ENCODE measurements at regions of chr5 and their contacts with region 1.

Region 1: GRCh38 chr5:77437194-77437593 is 54.9 kb downstream of the WDR41 start:
- DNase-seq: peak in 1 of 9 experiments; percentile 10
- ATAC-seq: no peak
- H3K4me3 ChIP-seq: no peak overlapping the region
- H3K4me3 Mint-ChIP-seq: no peak overlapping the region
- H3K27ac ChIP-seq: no peak overlapping the region
- H3K27ac Mint-ChIP-seq: no peak overlapping the region
- H3K4me1 ChIP-seq: no peaks in the 10 kb centered on the region
- H3K4me1 Mint-ChIP-seq: no peaks in the 10 kb centered on the region
- H3K27me3 ChIP-seq: no peaks in the 10 kb centered on the region
- H3K27me3 Mint-ChIP-seq: no peaks in the 10 kb centered on the region
- CTCF ChIP-seq: no peak

Region 2: GRCh38 chr5:77064040-77064439 is 373.2 kb before region 1 on chr5:
- CTCF ChIA-PET with region 1: no interaction called
- POLR2A ChIA-PET with region 1: no interaction called
- intact Hi-C with region 1: loop called in 1 of 2 experiments (anchors 10 kb)
- DNase-seq: no peak
- ATAC-seq: no peak
- H3K4me3 ChIP-seq: no peak overlapping the region
- H3K4me3 Mint-ChIP-seq: no peak overlapping the region
- H3K27ac ChIP-seq: no peak overlapping the region
- H3K27ac Mint-ChIP-seq: no peak overlapping the region
- H3K4me1 ChIP-seq: no peaks in the 10 kb centered on the region
- H3K4me1 Mint-ChIP-seq: peaks cover 11% of the 10 kb centered on the region
- H3K27me3 ChIP-seq: no peaks in the 10 kb centered on the region
- H3K27me3 Mint-ChIP-seq: no peaks in the 10 kb centered on the region
- CTCF ChIP-seq: no peak

Region 3: GRCh38 chr5:77638763-77639671 is 201.8 kb after region 1 on chr5:
- CTCF ChIA-PET with region 1: no interaction called
- POLR2A ChIA-PET with region 1: no interaction called
- intact Hi-C with region 1: no loop called
- DNase-seq: peak in 1 of 9 experiments; percentile 21
- ATAC-seq: no peak
- H3K4me3 ChIP-seq: no peak overlapping the region
- H3K4me3 Mint-ChIP-seq: no peak overlapping the region
- H3K27ac ChIP-seq: no peak overlapping the region
- H3K27ac Mint-ChIP-seq: no peak overlapping the region
- H3K4me1 ChIP-seq: peaks cover 15% of the 10 kb centered on the region
- H3K4me1 Mint-ChIP-seq: peaks cover 26% of the 10 kb centered on the region
- H3K27me3 ChIP-seq: peaks cover 78 to 92% of the 10 kb centered on the region in 2 experiments
- H3K27me3 Mint-ChIP-seq: peaks cover 69% of the 10 kb centered on the region
- CTCF ChIP-seq: no peak